ENCODE measurements at regions of chr2 and their contacts with region 1.

Region 1: GRCh38 chr2:55617175-55618024 is at the start of gene PPP4R3B:
- DNase-seq: peak; percentile 94 to 100 (median 99)
- ATAC-seq: peak; percentile 94
- H3K4me3 ChIP-seq: peak within 1 kb of the TSS; percentile 83
- H3K4me3 Mint-ChIP-seq: no peak within 1 kb of the TSS
- H3K27ac ChIP-seq: peak within 1 kb of the TSS; percentile 99
- H3K27ac Mint-ChIP-seq: no peak within 1 kb of the TSS
- H3K4me1 ChIP-seq: peaks cover 33 to 46% of the 10 kb centered on the region in 2 donors
- H3K4me1 Mint-ChIP-seq: peaks cover 23 to 67% (median 30%) of the 10 kb centered on the region in 7 donors
- H3K27me3 ChIP-seq: no peaks in the 10 kb centered on the region
- H3K27me3 Mint-ChIP-seq: no peaks in the 10 kb centered on the region
- total RNA-seq, gene PPP4R3B: 67.2 to 113 (median 88.0) TPM

Region 2: GRCh38 chr2:53786705-53787612 is 1830.4 kb before region 1 on chr2 and contains the starts of genes ASB3 and ERLEC1:
- CTCF ChIA-PET with region 1: no interaction called
- POLR2A ChIA-PET with region 1: no interaction called
- intact Hi-C with region 1: loop called (anchors 1 to 2 kb)
- DNase-seq: peak; percentile 69 to 87 (median 83)
- ATAC-seq: peak; percentile 95
- H3K4me3 ChIP-seq: peak within 1 kb of the TSS; percentile 66
- H3K4me3 Mint-ChIP-seq: peak within 1 kb of the TSS; percentile 88 to 99 (median 98)
- H3K27ac ChIP-seq: peak within 1 kb of the TSS; percentile 82
- H3K27ac Mint-ChIP-seq: peak within 1 kb of the TSS; percentile 81 to 99 (median 96)
- H3K4me1 ChIP-seq: peaks cover 14 to 16% of the 10 kb centered on the region in 2 donors
- H3K4me1 Mint-ChIP-seq: peaks cover 37 to 79% (median 67%) of the 10 kb centered on the region in 7 donors
- H3K27me3 ChIP-seq: no peaks in the 10 kb centered on the region
- H3K27me3 Mint-ChIP-seq: no peaks in the 10 kb centered on the region
- total RNA-seq, gene ASB3: 24.9 to 43.2 (median 34.5) TPM
- total RNA-seq, gene ERLEC1: 13.3 to 30.1 (median 26.3) TPM

Region 3: GRCh38 chr2:54558188-54559005 is 1059.0 kb before region 1 on chr2:
- CTCF ChIA-PET with region 1: no interaction called
- POLR2A ChIA-PET with region 1: no interaction called
- intact Hi-C with region 1: loop called in 1 of 2 experiments (anchors 2 kb)
- DNase-seq: peak; percentile 48 to 75 (median 64)
- ATAC-seq: peak; percentile 82
- H3K4me3 ChIP-seq: peak overlapping the region; percentile 94
- H3K4me3 Mint-ChIP-seq: peak overlapping the region; percentile 86 to 100 (median 98)
- H3K27ac ChIP-seq: peak overlapping the region; percentile 86
- H3K27ac Mint-ChIP-seq: peak overlapping the region; percentile 90 to 98 (median 96)
- H3K4me1 ChIP-seq: peaks cover 10 to 11% of the 10 kb centered on the region in 2 donors
- H3K4me1 Mint-ChIP-seq: peaks cover 29 to 65% (median 59%) of the 10 kb centered on the region in 7 donors
- H3K27me3 ChIP-seq: no peaks in the 10 kb centered on the region
- H3K27me3 Mint-ChIP-seq: no peaks in the 10 kb centered on the region

Region 4: DNA sequence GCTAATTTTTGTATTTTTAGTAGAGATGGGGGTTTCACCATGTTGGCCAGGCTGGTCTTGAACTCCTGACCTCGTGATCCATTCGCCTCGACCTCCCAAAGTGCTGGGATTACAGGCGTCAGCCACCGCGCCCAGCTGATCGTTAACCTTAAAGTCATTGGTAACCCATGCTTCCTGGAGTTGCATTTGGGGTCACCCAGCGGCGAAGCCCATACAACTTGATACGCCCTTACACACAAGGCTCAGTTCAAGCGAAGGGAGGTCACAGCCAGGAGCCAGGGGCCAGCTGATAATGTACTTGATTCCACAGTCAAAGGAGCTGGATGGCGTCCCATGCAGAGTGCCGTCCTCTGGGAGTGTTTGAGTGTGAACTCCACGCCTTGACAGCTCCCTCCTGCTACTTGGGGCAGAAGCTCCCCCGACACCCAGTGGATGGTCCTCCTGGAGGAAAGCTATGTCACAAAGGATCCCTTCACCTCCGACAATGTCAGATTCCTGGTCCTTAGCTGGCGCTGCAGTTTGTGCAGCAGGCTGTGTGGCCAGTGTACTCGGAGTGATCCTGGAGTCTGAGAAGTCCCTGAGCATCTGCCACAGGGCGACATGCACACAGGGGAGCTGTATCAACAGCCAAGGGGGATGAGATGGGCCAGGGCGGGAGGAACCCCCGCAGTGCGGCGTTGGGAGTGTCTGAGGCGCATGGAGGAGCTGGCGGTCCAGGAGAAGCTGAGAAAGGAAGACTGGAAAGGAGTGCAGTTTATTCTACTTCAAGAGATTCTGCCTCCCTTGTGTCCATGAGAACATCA is 393.2 kb before region 1 on chr2:
- CTCF ChIA-PET with region 1: no interaction called
- POLR2A ChIA-PET with region 1: interaction called, 4 read pairs
- intact Hi-C with region 1: loop called in 1 of 2 experiments (anchors 2 kb)
- DNase-seq: peak in 1 of 9 donors; percentile 13
- ATAC-seq: no peak
- H3K4me3 ChIP-seq: no peak overlapping the region
- H3K4me3 Mint-ChIP-seq: peak overlapping the region; percentile 71 to 89 (median 82)
- H3K27ac ChIP-seq: peak overlapping the region; percentile 92
- H3K27ac Mint-ChIP-seq: peak overlapping the region; percentile 72 to 94 (median 89)
- H3K4me1 ChIP-seq: peaks cover 14 to 18% of the 10 kb centered on the region in 2 donors
- H3K4me1 Mint-ChIP-seq: peaks cover 30 to 62% (median 48%) of the 10 kb centered on the region in 7 donors
- H3K27me3 ChIP-seq: no peaks in the 10 kb centered on the region
- H3K27me3 Mint-ChIP-seq: no peaks in the 10 kb centered on the region

Region 5: DNA sequence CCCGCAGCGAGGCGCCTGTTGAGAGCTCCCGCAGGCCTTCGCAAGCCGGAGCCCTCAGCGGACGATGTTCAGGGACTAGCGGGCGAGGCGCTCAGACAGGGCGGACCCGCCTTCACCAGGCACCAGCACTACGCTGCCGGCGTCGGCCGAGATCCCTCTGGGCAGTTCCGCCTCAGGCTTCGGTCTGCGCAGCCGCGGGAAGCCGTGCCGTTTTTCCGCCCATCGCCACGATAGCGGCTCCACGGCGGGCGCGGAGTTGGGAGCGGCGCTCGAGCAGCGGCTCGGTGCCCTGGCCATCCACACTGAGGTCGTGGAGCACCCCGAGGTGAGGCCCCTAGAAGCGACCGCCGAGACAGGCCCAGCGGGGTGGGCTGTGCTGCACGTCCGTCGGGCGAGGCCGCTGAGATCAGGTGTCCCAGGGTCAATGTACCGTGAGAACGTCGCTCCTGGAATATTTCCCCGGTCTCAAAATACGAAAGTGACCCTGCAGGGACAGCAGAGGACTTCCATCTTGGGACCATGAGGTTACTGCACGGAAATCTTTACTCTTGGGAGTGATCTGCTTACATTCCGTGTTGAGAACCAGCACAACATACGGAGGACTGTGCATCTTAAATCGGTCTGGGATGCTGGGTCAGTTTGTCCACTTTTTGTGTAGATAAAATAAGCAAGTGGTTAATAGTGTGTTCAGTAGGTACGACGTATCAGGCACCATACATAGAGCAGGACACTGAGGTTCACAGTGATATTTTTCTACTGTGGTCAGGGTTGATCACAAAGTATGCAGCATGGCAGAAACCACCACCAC is 335.1 kb before region 1 on chr2:
- CTCF ChIA-PET with region 1: no interaction called
- POLR2A ChIA-PET with region 1: interaction called, 5 read pairs
- intact Hi-C with region 1: loop called (anchors 1 kb)
- DNase-seq: peak; percentile 78 to 87 (median 83)
- ATAC-seq: peak; percentile 99
- H3K4me3 ChIP-seq: peak overlapping the region; percentile 80
- H3K4me3 Mint-ChIP-seq: peak overlapping the region; percentile 87 to 97 (median 92)
- H3K27ac ChIP-seq: peak overlapping the region; percentile 93
- H3K27ac Mint-ChIP-seq: peak overlapping the region; percentile 94 to 99 (median 98)
- H3K4me1 ChIP-seq: peaks cover 0 to 4% of the 10 kb centered on the region in 2 donors
- H3K4me1 Mint-ChIP-seq: peaks cover 11 to 43% (median 29%) of the 10 kb centered on the region in 7 donors
- H3K27me3 ChIP-seq: no peaks in the 10 kb centered on the region
- H3K27me3 Mint-ChIP-seq: peaks cover 0 to 2% (median 0%) of the 10 kb centered on the region in 5 donors

Region 6: DNA sequence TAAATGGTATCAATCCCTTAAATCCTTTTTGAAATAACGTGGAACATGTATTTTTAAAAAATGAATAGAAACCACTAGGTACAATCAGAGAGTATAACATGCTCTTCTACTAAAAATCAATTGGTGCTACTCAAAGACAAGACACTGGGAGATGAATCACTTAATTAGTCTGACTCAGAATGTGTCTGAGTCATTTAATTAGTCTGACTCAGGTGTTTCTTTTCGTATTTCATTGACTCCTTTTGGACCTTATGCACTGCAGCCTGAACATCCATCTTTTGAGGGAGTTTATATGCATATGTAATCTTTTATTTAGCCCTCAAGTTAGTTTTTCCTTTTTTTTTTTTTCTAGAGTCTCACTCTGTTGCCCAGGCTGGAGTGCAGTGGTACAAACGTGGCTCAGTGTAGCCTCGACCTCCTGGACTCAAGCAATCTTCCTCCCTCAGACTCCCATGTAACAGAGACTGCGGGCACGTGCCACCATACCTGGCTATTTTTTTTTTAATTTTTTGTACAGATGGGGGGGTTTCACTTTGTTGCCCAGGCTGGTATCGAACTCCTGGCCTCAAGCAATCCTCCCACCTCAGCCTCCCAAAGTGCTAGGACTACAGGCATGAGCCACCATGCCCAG is 26.5 kb before region 1 on chr2:
- CTCF ChIA-PET with region 1: interaction called, 3 read pairs
- POLR2A ChIA-PET with region 1: interaction called, 11 read pairs
- intact Hi-C with region 1: no loop called
- DNase-seq: no peak
- ATAC-seq: no peak
- H3K4me3 ChIP-seq: no peak overlapping the region
- H3K4me3 Mint-ChIP-seq: no peak overlapping the region
- H3K27ac ChIP-seq: no peak overlapping the region
- H3K27ac Mint-ChIP-seq: peak overlapping the region in 3 of 9 donors; percentile 31 to 48 (median 41)
- H3K4me1 ChIP-seq: no peaks in the 10 kb centered on the region
- H3K4me1 Mint-ChIP-seq: peaks cover 7 to 55% (median 46%) of the 10 kb centered on the region in 7 donors
- H3K27me3 ChIP-seq: no peaks in the 10 kb centered on the region
- H3K27me3 Mint-ChIP-seq: no peaks in the 10 kb centered on the region

Region 7: DNA sequence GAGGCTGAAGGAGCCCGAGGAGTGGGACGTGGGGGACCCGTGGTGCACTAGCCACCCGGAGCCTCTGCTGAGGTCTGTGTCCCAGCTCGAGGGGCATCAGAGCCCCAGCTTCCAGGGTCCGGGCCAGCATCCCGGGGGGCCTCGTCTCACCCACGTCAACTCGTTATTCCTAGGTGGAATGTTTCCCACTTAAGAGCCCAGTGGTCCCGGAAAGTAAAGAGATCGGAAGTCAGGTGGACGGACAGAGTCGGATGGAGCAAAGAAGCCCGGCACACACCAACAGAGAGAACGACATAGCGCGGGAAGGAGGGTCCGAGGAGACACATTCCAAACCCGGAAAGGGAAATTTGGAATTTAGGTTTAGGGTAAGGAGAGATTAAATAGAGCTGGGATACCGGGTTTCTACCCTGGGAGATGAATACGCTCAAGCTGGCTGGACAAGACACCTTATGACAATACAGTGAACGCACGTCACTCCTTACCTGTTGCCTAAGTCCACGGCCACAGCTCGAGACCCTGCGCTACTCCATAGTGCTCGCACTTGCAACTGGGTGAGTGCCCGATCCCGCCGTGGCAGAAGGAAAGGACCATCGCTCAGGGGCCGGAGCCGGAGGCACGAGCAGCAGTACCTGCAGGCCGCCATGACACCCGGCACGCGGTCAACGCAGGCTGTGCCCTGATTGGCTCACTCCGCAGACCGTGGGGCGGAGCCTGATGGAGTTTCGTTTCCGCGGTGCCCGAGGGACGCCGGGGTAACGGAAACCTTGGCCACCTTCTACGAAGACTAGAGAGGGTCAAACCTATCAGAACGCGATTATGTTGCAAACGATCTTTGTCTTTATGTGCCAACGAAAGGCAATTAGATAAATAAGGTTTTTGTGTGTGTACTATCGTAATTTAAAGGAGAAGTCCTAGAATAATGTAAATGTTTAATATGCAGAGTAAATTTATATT is 76.1 kb after region 1 on chr2 and contains the start of gene PNPT1:
- CTCF ChIA-PET with region 1: no interaction called
- POLR2A ChIA-PET with region 1: interaction called, 5 read pairs
- intact Hi-C with region 1: loop called (anchors 1 kb)
- DNase-seq: peak; percentile 78 to 92 (median 90)
- ATAC-seq: peak; percentile 100
- H3K4me3 ChIP-seq: peak within 1 kb of the TSS; percentile 90
- H3K4me3 Mint-ChIP-seq: peak within 1 kb of the TSS; percentile 94 to 99 (median 97)
- H3K27ac ChIP-seq: peak within 1 kb of the TSS; percentile 72
- H3K27ac Mint-ChIP-seq: peak within 1 kb of the TSS; percentile 92 to 99 (median 96)
- H3K4me1 ChIP-seq: peaks cover 0 to 6% of the 10 kb centered on the region in 2 donors
- H3K4me1 Mint-ChIP-seq: peaks cover 18 to 50% (median 43%) of the 10 kb centered on the region in 7 donors
- H3K27me3 ChIP-seq: no peaks in the 10 kb centered on the region
- H3K27me3 Mint-ChIP-seq: peaks cover 0 to 6% (median 3%) of the 10 kb centered on the region in 5 donors
- total RNA-seq, gene PNPT1: 16.9 to 31.2 (median 18.5) TPM

Region 8: GRCh38 chr2:55761526-55761925 is 144.1 kb after region 1 on chr2:
- CTCF ChIA-PET with region 1: no interaction called
- POLR2A ChIA-PET with region 1: no interaction called
- intact Hi-C with region 1: no loop called
- DNase-seq: no peak
- ATAC-seq: no peak
- H3K4me3 ChIP-seq: no peak overlapping the region
- H3K4me3 Mint-ChIP-seq: no peak overlapping the region
- H3K27ac ChIP-seq: no peak overlapping the region
- H3K27ac Mint-ChIP-seq: no peak overlapping the region
- H3K4me1 ChIP-seq: no peaks in the 10 kb centered on the region
- H3K4me1 Mint-ChIP-seq: no peaks in the 10 kb centered on the region
- H3K27me3 ChIP-seq: no peaks in the 10 kb centered on the region
- H3K27me3 Mint-ChIP-seq: peaks cover 5 to 40% (median 32%) of the 10 kb centered on the region in 5 donors

Measured in naive thymus-derived CD4-positive, alpha-beta T cell (primary cell).